AG04450 (cell line): ENCODE measurements at regions of chr7 and their contacts with region 1.

Region 1: DNA sequence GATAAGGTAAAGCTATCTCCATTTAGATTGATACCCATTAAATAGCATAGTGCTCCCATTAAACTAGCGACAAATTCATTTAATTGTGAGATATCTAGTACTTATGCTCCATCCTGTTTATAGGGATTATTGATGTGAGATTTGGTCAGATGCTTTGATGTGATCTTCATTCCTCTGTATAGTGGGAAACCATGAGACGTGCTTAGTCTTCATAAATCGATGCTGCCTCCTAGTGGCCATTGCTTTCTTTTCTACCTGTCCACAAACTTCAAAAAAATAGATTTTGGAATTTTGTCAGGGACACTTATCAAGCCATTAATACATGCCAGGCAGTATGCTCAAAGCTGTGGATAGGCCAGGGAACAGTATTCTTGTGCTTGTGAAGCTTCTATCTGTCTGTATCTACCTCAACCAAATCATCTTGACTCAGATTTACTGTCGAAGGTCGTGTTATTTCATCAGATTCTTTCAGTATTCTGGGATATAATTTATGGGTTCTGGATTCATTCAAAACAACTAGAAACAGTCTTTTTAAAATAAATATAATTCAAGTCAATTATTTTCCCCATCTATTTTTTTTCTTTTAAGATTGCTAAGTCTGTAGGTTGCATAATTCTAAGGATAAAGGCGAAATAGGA is 12.0 kb downstream of the LSM8 start:
- DNase-seq: peak; percentile 23
- H3K4me3 ChIP-seq: no peak overlapping the region
- H3K27ac ChIP-seq: no peak overlapping the region
- H3K27me3 ChIP-seq: no peaks in the 10 kb centered on the region
- CTCF ChIP-seq: peak; percentile 79

Region 2: GRCh38 chr7:117808341-117808757 is 387.6 kb before region 1 on chr7:
- CTCF ChIA-PET with region 1: no interaction called
- POLR2A ChIA-PET with region 1: no interaction called
- DNase-seq: no peak
- H3K4me3 ChIP-seq: no peak overlapping the region
- H3K27ac ChIP-seq: no peak overlapping the region
- H3K27me3 ChIP-seq: no peaks in the 10 kb centered on the region
- CTCF ChIP-seq: no peak

Region 3: DNA sequence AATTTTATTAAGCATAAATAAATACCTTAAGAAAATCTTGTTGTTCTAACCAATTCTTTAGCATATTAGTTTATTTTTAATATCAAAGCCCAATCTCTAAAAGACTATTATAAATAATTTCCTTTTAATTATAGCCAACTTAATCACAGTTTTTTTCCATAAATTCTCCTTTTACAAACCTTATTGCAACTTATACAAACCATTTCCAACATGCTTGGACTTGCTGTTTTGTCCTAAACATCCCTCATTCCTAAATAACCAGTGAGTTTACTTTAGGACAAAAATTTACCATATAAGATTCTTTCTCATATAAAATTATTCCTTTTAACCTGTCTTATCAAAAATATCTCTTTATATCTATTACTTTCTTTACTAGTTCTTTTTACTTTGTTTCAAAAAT is 37.2 kb before region 1 on chr7:
- CTCF ChIA-PET with region 1: interaction called, 10 read pairs
- POLR2A ChIA-PET with region 1: no interaction called
- DNase-seq: no peak
- H3K4me3 ChIP-seq: no peak overlapping the region
- H3K27ac ChIP-seq: no peak overlapping the region
- H3K27me3 ChIP-seq: no peaks in the 10 kb centered on the region
- CTCF ChIP-seq: no peak

Region 4: DNA sequence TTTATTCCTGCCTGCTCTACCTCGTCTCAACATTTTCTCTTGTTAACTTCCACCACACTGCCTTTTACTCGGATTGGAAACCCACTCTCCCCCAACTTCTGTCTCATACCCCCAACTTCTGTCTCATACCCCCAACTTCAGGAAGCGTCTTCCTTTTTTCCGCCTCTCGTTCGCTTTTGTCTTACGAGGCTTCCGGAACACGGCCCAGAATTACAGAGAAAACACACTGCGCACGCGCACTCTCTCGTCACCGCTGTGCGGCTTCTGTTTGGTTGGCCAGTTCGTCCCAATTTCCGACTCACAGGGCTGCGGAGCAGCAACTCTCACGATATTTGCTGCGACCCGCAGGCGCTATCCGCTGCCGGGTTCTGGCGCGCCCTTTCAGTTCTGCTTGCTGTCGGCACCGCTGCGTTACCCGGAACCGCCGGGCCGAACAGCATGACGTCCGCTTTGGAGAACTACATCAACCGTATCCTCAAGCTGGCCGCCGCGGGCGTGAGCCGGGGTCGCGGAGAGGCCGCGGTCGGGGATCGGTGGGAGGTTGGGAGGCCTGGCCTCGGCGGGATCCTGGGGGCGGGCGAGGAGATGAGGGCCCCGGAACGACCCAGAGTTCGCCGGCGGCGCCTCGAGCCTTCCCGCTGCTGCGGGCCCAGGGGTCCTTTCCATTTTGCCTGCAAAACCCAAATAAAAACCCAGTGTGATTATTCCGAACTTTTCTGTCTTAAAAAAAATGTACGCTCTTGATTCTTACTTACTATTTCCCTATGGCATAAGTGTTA is 12.0 kb before region 1 on chr7 and contains the start of gene LSM8:
- CTCF ChIA-PET with region 1: interaction called, 20 read pairs
- POLR2A ChIA-PET with region 1: no interaction called
- DNase-seq: peak; percentile 98
- H3K4me3 ChIP-seq: peak within 1 kb of the TSS; percentile 61
- H3K27ac ChIP-seq: peak within 1 kb of the TSS; percentile 92
- H3K27me3 ChIP-seq: no peaks in the 10 kb centered on the region
- CTCF ChIP-seq: no peak
- polyA plus RNA-seq, gene LSM8: 37.1 and 42.6 TPM in 2 replicates

Region 5: DNA sequence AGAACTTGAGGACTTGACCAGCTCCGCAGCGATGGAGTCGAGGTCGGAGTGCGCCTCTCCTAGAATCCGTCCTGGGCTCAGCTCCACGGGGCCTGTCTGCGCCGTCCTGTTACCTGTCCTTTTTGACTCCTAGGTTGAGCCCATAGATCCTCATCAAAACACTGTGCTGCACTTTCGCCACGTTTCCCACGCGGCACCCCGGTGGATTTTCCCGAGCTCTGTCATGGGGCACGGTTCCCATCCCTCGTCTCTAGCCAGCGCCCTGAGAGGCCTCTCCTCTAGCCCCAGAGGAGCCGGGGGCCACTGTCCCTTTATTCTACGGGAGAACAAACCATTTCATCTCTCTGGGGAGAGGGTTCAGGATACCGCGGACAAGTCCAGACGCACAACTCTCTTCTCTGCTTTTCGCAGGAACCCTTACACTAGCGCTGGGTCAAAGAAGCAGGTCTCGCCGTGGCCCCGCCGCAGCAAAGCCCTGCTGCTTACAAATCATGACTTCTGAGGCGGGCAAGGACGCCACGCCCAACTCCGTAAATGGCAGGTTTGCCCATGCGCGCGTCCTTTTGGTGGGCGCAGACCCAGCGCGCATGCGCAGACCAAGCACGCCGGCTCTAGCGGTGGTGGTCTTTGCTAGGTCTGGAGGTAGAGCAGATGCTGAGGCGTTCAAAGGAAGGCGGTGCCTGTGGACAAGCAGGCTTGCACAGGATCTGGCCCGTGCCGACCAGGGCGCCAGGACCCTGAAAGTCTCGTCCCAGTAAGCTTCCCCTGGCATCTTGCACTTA is 18.3 kb after region 1 on chr7:
- CTCF ChIA-PET with region 1: interaction called, 13 read pairs
- POLR2A ChIA-PET with region 1: no interaction called
- DNase-seq: peak; percentile 55
- H3K4me3 ChIP-seq: peak overlapping the region; percentile 75
- H3K27ac ChIP-seq: no peak overlapping the region
- H3K27me3 ChIP-seq: no peaks in the 10 kb centered on the region
- CTCF ChIP-seq: no peak

Region 6: GRCh38 chr7:118232837-118233236 is 36.9 kb after region 1 on chr7:
- CTCF ChIA-PET with region 1: interaction called, 11 read pairs
- POLR2A ChIA-PET with region 1: no interaction called
- DNase-seq: no peak
- H3K4me3 ChIP-seq: no peak overlapping the region
- H3K27ac ChIP-seq: no peak overlapping the region
- H3K27me3 ChIP-seq: no peaks in the 10 kb centered on the region
- CTCF ChIP-seq: no peak